CD4-positive, alpha-beta T cell (primary cell): ENCODE measurements at regions of chr2 and their contacts with region 1.

Region 1: GRCh38 chr2:151619337-151619989 is 114.8 kb downstream of the NEB start:
- DNase-seq: no peak
- ATAC-seq: no peak
- H3K4me3 ChIP-seq: no peak overlapping the region
- H3K4me3 Mint-ChIP-seq: no peak overlapping the region
- H3K27ac ChIP-seq: no peak overlapping the region
- H3K27ac Mint-ChIP-seq: no peak overlapping the region
- H3K4me1 ChIP-seq: peaks cover 3% of the 10 kb centered on the region
- H3K4me1 Mint-ChIP-seq: peaks cover 12% of the 10 kb centered on the region
- H3K27me3 ChIP-seq: no peaks in the 10 kb centered on the region
- H3K27me3 Mint-ChIP-seq: no peaks in the 10 kb centered on the region
- CTCF ChIP-seq: no peak

Region 2: DNA sequence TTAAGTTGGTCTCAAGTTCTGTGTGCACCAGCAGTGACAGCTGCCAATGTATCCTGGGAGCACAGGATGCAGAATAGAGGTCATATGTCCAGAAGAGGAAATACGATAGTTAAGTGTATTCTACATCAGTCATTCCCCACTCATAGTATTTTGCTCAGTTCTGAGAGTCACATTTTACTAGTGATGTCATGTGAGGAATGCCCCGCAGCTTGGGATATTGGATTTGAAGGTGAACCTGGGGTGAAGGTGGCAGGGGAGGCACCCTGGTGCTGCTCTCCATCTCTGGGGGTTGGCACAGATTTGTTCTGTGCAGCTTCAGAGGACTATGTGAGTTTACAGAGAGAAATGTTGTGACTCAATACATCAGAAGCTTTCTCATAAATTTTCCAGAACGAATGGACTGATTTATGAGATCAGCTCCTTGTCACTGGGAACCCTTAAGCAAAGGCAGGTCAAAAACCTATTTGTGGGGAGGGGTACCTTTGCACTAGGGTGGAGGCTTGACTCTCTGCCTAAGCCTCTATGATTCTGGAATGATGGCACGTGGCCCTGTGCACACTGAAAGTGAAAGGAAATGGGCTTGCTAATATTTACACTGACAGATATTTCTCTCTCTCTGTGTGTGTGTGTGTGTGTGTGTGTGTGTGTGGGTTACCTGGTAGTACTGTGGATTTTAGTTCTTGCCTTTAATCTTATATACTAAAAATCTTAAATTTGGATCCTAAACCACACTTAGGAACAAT is 18.9 kb after region 1 on chr2:
- CTCF ChIA-PET with region 1: no interaction called
- POLR2A ChIA-PET with region 1: no interaction called
- intact Hi-C with region 1: no loop called
- DNase-seq: peak in 10 of 14 experiments; percentile 4 to 83 (median 34)
- ATAC-seq: peak; percentile 44
- H3K4me3 ChIP-seq: no peak overlapping the region
- H3K4me3 Mint-ChIP-seq: peak overlapping the region; percentile 66
- H3K27ac ChIP-seq: peak overlapping the region; percentile 72 to 78
- H3K27ac Mint-ChIP-seq: peak overlapping the region; percentile 88
- H3K4me1 ChIP-seq: peaks cover 30% of the 10 kb centered on the region
- H3K4me1 Mint-ChIP-seq: peaks cover 56% of the 10 kb centered on the region
- H3K27me3 ChIP-seq: no peaks in the 10 kb centered on the region
- H3K27me3 Mint-ChIP-seq: no peaks in the 10 kb centered on the region
- CTCF ChIP-seq: no peak

Region 3: GRCh38 chr2:151808258-151809072 is 189.0 kb after region 1 on chr2:
- CTCF ChIA-PET with region 1: no interaction called
- POLR2A ChIA-PET with region 1: no interaction called
- intact Hi-C with region 1: loop called (anchors 10 kb)
- DNase-seq: peak in 4 of 14 experiments; percentile 13 to 60 (median 57)
- ATAC-seq: peak; percentile 73
- H3K4me3 ChIP-seq: no peak overlapping the region
- H3K4me3 Mint-ChIP-seq: no peak overlapping the region
- H3K27ac ChIP-seq: no peak overlapping the region
- H3K27ac Mint-ChIP-seq: peak overlapping the region; percentile 51
- H3K4me1 ChIP-seq: peaks cover 4% of the 10 kb centered on the region
- H3K4me1 Mint-ChIP-seq: peaks cover 5% of the 10 kb centered on the region
- H3K27me3 ChIP-seq: no peaks in the 10 kb centered on the region
- H3K27me3 Mint-ChIP-seq: no peaks in the 10 kb centered on the region
- CTCF ChIP-seq: peak; percentile 77

Region 4: DNA sequence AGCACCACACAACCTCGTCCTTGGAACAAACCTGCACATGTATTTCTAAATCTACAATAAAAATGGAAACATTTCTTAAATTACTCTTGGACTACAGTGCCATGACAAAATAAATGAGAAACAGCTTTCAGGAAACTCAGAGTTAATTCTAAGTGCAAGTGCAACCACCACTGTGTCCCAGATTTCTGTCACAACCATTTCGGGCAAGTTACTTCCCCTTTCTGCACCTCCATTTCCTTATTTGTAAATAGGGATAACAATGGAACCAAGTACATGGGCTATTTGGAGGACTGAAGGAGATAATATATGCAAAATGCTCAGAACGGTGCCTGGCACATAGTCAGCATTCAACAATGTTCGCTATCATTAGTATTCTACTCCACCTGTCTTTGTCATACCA is 386.1 kb after region 1 on chr2:
- CTCF ChIA-PET with region 1: no interaction called
- POLR2A ChIA-PET with region 1: no interaction called
- intact Hi-C with region 1: loop called in 1 of 2 experiments (anchors 10 kb)
- DNase-seq: no peak
- ATAC-seq: no peak
- H3K4me3 ChIP-seq: no peak overlapping the region
- H3K4me3 Mint-ChIP-seq: no peak overlapping the region
- H3K27ac ChIP-seq: no peak overlapping the region
- H3K27ac Mint-ChIP-seq: no peak overlapping the region
- H3K4me1 ChIP-seq: peaks cover 4% of the 10 kb centered on the region
- H3K4me1 Mint-ChIP-seq: peaks cover 4% of the 10 kb centered on the region
- H3K27me3 ChIP-seq: no peaks in the 10 kb centered on the region
- H3K27me3 Mint-ChIP-seq: peaks cover 5% of the 10 kb centered on the region
- CTCF ChIP-seq: no peak